ENCODE measurements at regions of chr1 and their contacts with region 1.

Region 1: DNA sequence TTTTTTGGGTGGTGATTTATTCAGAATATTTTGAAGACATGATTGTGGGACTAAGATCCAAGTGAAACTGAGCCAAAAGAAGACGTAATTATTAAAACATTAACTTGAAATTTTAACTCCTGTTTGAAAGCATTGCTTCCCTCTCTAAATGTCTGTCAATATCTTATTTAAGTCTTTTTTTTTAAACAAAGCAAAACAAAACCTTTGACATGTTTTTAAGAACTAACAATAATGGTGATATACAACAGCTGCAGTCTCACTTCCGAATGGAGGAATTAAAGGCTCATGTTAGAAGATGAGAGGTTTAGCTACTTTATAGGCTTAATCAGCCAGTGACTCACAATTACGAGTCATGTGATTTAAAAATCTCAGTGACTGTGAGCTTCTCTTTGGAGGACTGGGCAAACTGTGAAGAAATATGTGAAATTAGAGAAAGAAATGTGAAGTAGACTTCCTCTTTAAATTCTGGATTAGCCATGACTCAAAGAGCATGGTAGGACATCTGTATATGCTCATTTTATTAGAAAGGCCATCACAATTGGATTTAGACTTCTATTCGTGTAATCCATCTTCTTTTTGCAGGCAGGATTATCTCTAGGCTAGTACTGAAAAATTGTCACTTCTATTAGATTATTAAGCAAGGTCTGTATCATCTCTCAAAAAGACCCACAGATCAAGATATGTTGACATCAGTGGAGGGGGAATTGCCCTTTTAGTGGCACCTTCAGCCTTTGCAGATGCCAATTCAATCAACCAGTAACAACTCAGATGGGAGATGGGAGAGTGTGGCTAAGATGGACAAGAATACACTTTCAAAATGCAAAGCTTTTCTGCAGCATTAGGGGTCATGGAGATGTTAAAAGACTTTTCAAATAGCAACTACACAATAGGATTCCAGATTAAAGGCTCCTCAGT is 28.7 kb downstream of the KCNA3 start:
- DNase-seq: no peak
- H3K4me3 Mint-ChIP-seq: no peak overlapping the region
- H3K27ac Mint-ChIP-seq: peak overlapping the region; percentile 83
- H3K4me1 Mint-ChIP-seq: peaks cover 46% of the 10 kb centered on the region
- H3K27me3 Mint-ChIP-seq: no peaks in the 10 kb centered on the region

Region 2: GRCh38 chr1:110630839-110631663 is 15.0 kb before region 1 on chr1:
- CTCF ChIA-PET with region 1: interaction called, 141 read pairs
- POLR2A ChIA-PET with region 1: interaction called, 5 read pairs
- DNase-seq: peak; percentile 93
- H3K4me3 Mint-ChIP-seq: no peak overlapping the region
- H3K27ac Mint-ChIP-seq: no peak overlapping the region
- H3K4me1 Mint-ChIP-seq: peaks cover 33% of the 10 kb centered on the region
- H3K27me3 Mint-ChIP-seq: no peaks in the 10 kb centered on the region

Region 3: DNA sequence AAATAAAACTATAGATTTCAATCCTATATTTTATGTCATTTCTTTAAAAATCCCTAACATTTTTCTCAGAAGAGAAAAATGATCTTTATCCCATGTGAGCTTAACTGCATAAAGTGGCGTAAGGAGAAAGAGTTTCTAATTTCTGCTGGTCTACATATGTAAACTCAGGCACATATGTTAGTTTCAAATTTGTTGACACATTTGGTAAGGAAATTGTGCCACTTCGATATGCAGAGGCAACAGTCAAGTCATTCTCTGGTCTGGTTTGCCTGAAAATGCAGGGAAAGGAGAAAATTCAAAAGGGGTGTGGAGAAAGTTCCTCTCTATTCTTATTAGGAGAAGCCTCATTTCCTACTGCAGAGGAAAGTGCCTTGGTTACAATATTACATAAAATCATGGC is 17.2 kb after region 1 on chr1:
- CTCF ChIA-PET with region 1: interaction called, 11 read pairs
- POLR2A ChIA-PET with region 1: no interaction called
- DNase-seq: no peak
- H3K4me3 Mint-ChIP-seq: no peak overlapping the region
- H3K27ac Mint-ChIP-seq: no peak overlapping the region
- H3K4me1 Mint-ChIP-seq: peaks cover 36% of the 10 kb centered on the region
- H3K27me3 Mint-ChIP-seq: no peaks in the 10 kb centered on the region

Measured in activated CD4-positive, alpha-beta T cell treated with anti-CD3 and anti-CD28 coated beads, Interleukin-2, amount 10 ng/mL, durations not matched to agents 7 days and 5 days (primary cell).